ENCODE measurements at regions of chr18 and their contacts with region 1.

Region 1: DNA sequence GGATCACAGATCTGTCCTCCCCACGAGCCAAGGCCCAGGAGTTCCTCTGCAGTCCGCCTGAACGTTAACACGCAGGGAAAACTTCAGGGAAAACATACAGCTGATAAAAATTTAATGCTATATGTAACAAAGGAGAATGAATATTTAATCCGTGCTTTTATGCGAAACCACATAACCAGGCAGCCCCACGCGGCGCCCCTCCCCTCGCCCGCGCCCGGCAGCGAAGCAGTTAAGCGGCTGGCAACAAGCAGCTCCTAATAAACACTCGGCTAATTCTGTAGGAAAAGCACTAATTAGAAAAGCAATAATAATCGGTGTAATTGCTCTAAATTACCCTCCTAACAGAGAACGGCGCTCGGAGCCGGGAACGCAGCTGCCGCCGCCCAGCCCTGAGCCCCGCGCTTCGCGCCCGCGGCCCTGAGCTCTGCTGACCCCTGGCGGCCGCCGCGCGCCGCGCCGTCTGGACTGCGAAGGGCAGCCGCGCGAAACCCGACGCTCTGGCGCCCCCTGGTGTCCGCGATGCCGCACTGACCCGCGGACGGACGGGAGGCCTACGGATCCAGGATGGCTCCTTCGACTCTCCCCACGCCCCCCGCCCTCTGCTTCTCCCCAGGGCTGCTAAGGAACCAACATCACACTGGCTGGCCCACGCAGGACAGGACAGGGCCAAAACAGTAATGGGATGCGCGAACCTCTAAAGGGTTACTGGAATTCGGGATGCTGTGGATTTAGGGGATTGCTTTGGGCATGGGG is 181.4 kb downstream of the SMAD2 start:
- DNase-seq: peak; percentile 75
- H3K4me3 Mint-ChIP-seq: no peak overlapping the region
- H3K27ac Mint-ChIP-seq: no peak overlapping the region
- H3K4me1 Mint-ChIP-seq: peaks cover 4% of the 10 kb centered on the region
- H3K27me3 Mint-ChIP-seq: peaks cover 7% of the 10 kb centered on the region

Region 2: DNA sequence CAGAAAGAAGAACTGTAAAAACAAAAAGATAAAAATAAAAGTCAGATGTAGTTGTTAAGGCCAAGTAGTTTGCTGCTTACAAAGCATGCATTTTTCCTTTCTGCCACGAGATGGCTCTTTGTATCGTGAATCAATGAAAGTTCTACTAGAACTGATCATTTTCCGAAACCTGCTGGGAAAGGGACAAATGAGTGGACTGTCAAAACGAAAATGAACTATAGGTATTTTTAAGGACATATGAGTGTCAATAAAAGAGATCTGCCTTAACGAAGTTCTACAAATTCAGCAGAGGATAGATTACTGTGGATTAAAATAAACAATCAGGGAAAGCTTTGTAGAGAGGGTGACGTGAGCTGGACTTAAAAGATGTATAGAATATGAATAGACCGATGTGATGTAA is 698.6 kb before region 1 on chr18:
- intact Hi-C with region 1: loop called (anchors 1 kb)
- DNase-seq: no peak
- H3K4me3 Mint-ChIP-seq: no peak overlapping the region
- H3K27ac Mint-ChIP-seq: no peak overlapping the region
- H3K4me1 Mint-ChIP-seq: no peaks in the 10 kb centered on the region
- H3K27me3 Mint-ChIP-seq: peaks cover 6% of the 10 kb centered on the region

Region 3: DNA sequence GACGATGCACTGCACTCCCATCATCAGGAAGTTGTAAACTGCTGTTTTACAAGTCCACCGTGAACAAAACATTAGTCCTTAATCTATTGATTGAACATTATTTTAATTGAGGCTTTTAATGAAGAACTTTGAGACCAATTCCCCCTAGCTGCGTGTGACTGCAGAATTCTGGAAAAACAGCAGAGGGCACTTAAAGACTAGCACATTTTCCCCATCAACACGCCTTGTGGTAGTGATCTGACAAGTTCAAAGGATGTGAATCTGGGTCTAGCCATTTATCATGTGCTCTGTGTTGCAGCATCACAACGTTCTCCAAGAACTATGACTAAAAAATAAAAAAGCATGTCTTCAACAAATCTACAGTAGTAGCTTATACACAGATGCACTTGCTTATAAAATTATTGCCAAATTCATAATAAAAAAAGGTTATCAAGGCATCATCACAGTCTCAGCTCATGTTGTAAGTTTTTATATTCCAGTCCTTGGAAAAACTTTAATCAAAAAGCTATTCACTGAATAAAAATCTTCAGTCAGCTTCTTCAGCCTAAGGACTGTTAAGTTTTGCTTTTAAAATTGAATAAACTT is 533.4 kb before region 1 on chr18:
- intact Hi-C with region 1: loop called (anchors 1 kb)
- DNase-seq: no peak
- H3K4me3 Mint-ChIP-seq: no peak overlapping the region
- H3K27ac Mint-ChIP-seq: no peak overlapping the region
- H3K4me1 Mint-ChIP-seq: no peaks in the 10 kb centered on the region
- H3K27me3 Mint-ChIP-seq: peaks cover 50% of the 10 kb centered on the region

Region 4: GRCh38 chr18:47595815-47596496 is 153.1 kb before region 1 on chr18:
- intact Hi-C with region 1: loop called (anchors 5 kb)
- DNase-seq: no peak
- H3K4me3 Mint-ChIP-seq: no peak overlapping the region
- H3K27ac Mint-ChIP-seq: no peak overlapping the region
- H3K4me1 Mint-ChIP-seq: peaks cover 5% of the 10 kb centered on the region
- H3K27me3 Mint-ChIP-seq: peaks cover 20% of the 10 kb centered on the region

Region 5: GRCh38 chr18:48167897-48168253 is 418.9 kb after region 1 on chr18:
- intact Hi-C with region 1: no loop called
- DNase-seq: no peak
- H3K4me3 Mint-ChIP-seq: no peak overlapping the region
- H3K27ac Mint-ChIP-seq: no peak overlapping the region
- H3K4me1 Mint-ChIP-seq: peaks cover 5% of the 10 kb centered on the region
- H3K27me3 Mint-ChIP-seq: peaks cover 29% of the 10 kb centered on the region